CD8-positive, alpha-beta T cell (primary cell): ENCODE measurements at regions of chr9 and their contacts with region 1.

Region 1: DNA sequence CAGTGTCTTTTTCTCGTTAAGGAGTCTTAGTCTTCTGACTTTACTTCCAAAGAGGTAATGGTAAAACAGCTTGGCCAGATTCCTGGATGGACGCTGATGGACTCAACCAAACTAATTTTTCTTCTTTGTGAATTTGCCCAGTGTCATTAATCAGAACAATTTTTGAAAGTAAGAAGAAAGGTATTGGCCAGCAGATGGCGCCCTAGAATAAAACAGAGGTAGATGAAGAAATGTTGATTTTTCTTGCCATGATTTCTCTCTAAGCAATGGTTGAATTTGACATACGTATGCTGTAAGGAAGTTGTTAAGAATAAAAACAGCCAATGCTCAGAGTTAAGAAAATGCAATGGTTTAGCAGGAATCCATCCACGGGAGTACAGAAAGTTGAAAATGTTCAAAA is 500.0 kb downstream of the DIRAS2 start:
- DNase-seq: peak; percentile 8 to 66 (median 56)
- ATAC-seq: no peak
- H3K4me3 ChIP-seq: no peak overlapping the region
- H3K4me3 Mint-ChIP-seq: no peak overlapping the region
- H3K27ac ChIP-seq: no peak overlapping the region
- H3K27ac Mint-ChIP-seq: no peak overlapping the region
- H3K4me1 ChIP-seq: no peaks in the 10 kb centered on the region
- H3K4me1 Mint-ChIP-seq: peaks cover 3% of the 10 kb centered on the region
- H3K27me3 ChIP-seq: no peaks in the 10 kb centered on the region
- H3K27me3 Mint-ChIP-seq: peaks cover 32% of the 10 kb centered on the region
- CTCF ChIP-seq: peak; percentile 79

Region 2: GRCh38 chr9:90107726-90108655 is 34.6 kb before region 1 on chr9:
- CTCF ChIA-PET with region 1: no interaction called
- POLR2A ChIA-PET with region 1: no interaction called
- intact Hi-C with region 1: no loop called
- DNase-seq: no peak
- ATAC-seq: no peak
- H3K4me3 ChIP-seq: no peak overlapping the region
- H3K4me3 Mint-ChIP-seq: no peak overlapping the region
- H3K27ac ChIP-seq: no peak overlapping the region
- H3K27ac Mint-ChIP-seq: no peak overlapping the region
- H3K4me1 ChIP-seq: no peaks in the 10 kb centered on the region
- H3K4me1 Mint-ChIP-seq: no peaks in the 10 kb centered on the region
- H3K27me3 ChIP-seq: no peaks in the 10 kb centered on the region
- H3K27me3 Mint-ChIP-seq: peaks cover 9% of the 10 kb centered on the region
- CTCF ChIP-seq: no peak

Region 3: DNA sequence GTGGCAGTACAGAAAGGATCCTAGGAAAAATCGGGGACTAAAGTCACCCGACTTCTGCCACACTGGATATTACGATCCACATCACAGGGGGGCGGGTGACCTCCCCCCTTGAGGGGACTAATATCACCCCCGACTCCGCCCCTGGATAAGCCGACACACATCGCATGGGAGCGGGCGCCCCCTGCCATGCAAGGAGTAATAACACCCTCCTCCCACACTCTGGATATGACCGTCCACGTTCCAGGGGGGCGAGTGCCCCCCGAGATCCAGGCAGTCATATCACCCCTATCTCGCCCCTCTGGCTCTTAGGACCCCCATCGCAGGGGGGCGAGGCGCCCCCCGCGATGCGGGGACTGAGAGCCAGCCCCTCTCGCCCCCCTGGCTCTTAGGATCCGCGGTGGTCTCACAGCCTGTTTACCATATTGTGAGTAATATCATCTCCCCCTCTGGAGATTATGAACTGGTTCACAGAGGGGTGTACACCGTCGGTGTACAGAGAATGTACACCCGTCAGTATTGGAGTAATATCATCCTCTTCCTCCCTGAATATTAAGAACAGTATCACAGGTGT is 77.1 kb after region 1 on chr9:
- CTCF ChIA-PET with region 1: interaction called, 3 read pairs
- POLR2A ChIA-PET with region 1: no interaction called
- intact Hi-C with region 1: loop called in 1 of 2 experiments (anchors 10 kb)
- DNase-seq: peak in 8 of 9 experiments; percentile 7 to 53 (median 24)
- ATAC-seq: no peak
- H3K4me3 ChIP-seq: no peak overlapping the region
- H3K4me3 Mint-ChIP-seq: no peak overlapping the region
- H3K27ac ChIP-seq: no peak overlapping the region
- H3K27ac Mint-ChIP-seq: no peak overlapping the region
- H3K4me1 ChIP-seq: no peaks in the 10 kb centered on the region
- H3K4me1 Mint-ChIP-seq: peaks cover 3% of the 10 kb centered on the region
- H3K27me3 ChIP-seq: no peaks in the 10 kb centered on the region
- H3K27me3 Mint-ChIP-seq: peaks cover 11% of the 10 kb centered on the region
- CTCF ChIP-seq: no peak

Region 4: GRCh38 chr9:90546229-90546641 is 403.7 kb after region 1 on chr9:
- CTCF ChIA-PET with region 1: no interaction called
- POLR2A ChIA-PET with region 1: no interaction called
- intact Hi-C with region 1: no loop called
- DNase-seq: no peak
- ATAC-seq: no peak
- H3K4me3 ChIP-seq: no peak overlapping the region
- H3K4me3 Mint-ChIP-seq: no peak overlapping the region
- H3K27ac ChIP-seq: no peak overlapping the region
- H3K27ac Mint-ChIP-seq: no peak overlapping the region
- H3K4me1 ChIP-seq: no peaks in the 10 kb centered on the region
- H3K4me1 Mint-ChIP-seq: no peaks in the 10 kb centered on the region
- H3K27me3 ChIP-seq: no peaks in the 10 kb centered on the region
- H3K27me3 Mint-ChIP-seq: peaks cover 9% of the 10 kb centered on the region
- CTCF ChIP-seq: no peak

Region 5: GRCh38 chr9:90870621-90871326 is 728.2 kb after region 1 on chr9:
- CTCF ChIA-PET with region 1: interaction called, 7 read pairs
- POLR2A ChIA-PET with region 1: interaction called, 3 read pairs
- intact Hi-C with region 1: loop called (anchors 1 to 10 kb)
- DNase-seq: peak in 6 of 9 experiments; percentile 7 to 65 (median 50)
- ATAC-seq: no peak
- H3K4me3 ChIP-seq: no peak overlapping the region
- H3K4me3 Mint-ChIP-seq: no peak overlapping the region
- H3K27ac ChIP-seq: no peak overlapping the region
- H3K27ac Mint-ChIP-seq: no peak overlapping the region
- H3K4me1 ChIP-seq: no peaks in the 10 kb centered on the region
- H3K4me1 Mint-ChIP-seq: no peaks in the 10 kb centered on the region
- H3K27me3 ChIP-seq: no peaks in the 10 kb centered on the region
- H3K27me3 Mint-ChIP-seq: no peaks in the 10 kb centered on the region
- CTCF ChIP-seq: peak; percentile 95